Left lung (tissue), 14 donors: ENCODE measurements at regions of chr12 and their contacts with region 1.

Region 1: DNA sequence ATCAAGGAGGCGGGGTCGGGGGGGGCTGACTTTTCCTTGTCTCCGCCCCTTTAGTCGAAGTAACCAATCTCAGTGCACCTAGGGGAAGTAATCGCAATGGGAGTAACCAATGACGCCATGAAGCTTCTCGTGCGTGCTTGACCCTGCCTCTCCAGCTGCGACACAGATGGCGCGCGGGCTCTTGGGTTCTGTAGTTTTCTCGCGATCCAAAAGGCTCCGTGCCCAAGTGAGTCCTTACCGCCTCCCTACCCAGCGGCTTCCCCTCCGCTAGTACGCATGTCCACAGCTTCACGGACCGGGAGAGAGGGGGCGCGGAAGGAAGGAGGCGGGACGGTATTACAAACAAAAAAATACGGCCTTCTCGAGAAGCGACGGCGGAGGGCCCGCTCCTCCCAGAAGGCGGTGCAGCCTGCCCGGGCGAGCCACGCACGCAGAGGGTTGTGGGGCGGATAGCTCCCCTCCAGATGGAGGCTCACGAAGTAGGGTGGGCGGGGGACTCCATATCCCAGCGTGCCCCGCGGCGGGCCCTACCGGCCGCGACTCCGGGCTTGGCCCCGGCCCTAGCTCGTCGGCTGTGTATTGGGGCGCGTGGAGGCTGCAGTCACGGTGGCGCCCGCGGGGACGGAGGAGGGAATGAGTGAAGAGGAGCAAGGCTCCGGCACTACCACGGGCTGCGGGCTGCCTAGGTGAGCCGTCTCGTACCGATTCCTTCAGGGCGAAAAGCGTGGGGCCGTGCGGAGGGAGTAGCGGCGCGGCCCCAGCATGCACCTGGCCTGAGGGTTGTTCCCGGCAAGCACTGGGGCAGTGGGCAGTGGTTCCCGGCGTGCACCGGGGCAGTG is at the start of gene TARBP2:
- DNase-seq: peak; percentile 96 to 99 (median 98)
- ATAC-seq: peak; percentile 83
- H3K4me3 ChIP-seq: peak within 1 kb of the TSS; percentile 66 to 77
- H3K27ac ChIP-seq: peak within 1 kb of the TSS; percentile 98
- H3K4me1 ChIP-seq: peaks cover 24 to 54% of the 10 kb centered on the region in 2 donors
- H3K27me3 ChIP-seq: no peaks in the 10 kb centered on the region
- CTCF ChIP-seq: no peak
- polyA plus RNA-seq, gene TARBP2: 43.5 to 58.6 (median 50.1) TPM

Region 2: GRCh38 chr12:53047221-53048042 is 453.6 kb before region 1 on chr12:
- intact Hi-C with region 1: no loop called
- DNase-seq: peak; percentile 76 to 94 (median 86)
- ATAC-seq: peak; percentile 19
- H3K4me3 ChIP-seq: peak overlapping the region; percentile 36 to 68
- H3K27ac ChIP-seq: peak overlapping the region; percentile 89 to 96
- H3K4me1 ChIP-seq: peaks cover 42 to 57% of the 10 kb centered on the region in 2 donors
- H3K27me3 ChIP-seq: peaks cover 0 to 10% of the 10 kb centered on the region in 2 donors
- CTCF ChIP-seq: no peak

Region 3: GRCh38 chr12:53321074-53321814 is 179.8 kb before region 1 on chr12 and contains the start of gene AAAS:
- intact Hi-C with region 1: loop called in 1 of 2 experiments (anchors 10 kb)
- DNase-seq: peak; percentile 96 to 99 (median 98)
- ATAC-seq: peak; percentile 90
- H3K4me3 ChIP-seq: peak within 1 kb of the TSS; percentile 55 to 65
- H3K27ac ChIP-seq: peak within 1 kb of the TSS; percentile 91 to 97
- H3K4me1 ChIP-seq: peaks cover 17 to 47% of the 10 kb centered on the region in 2 donors
- H3K27me3 ChIP-seq: peaks cover 0 to 11% of the 10 kb centered on the region in 2 donors
- CTCF ChIP-seq: peak; percentile 100
- polyA plus RNA-seq, gene AAAS: 71.8 to 87.9 (median 79.6) TPM

Region 4: DNA sequence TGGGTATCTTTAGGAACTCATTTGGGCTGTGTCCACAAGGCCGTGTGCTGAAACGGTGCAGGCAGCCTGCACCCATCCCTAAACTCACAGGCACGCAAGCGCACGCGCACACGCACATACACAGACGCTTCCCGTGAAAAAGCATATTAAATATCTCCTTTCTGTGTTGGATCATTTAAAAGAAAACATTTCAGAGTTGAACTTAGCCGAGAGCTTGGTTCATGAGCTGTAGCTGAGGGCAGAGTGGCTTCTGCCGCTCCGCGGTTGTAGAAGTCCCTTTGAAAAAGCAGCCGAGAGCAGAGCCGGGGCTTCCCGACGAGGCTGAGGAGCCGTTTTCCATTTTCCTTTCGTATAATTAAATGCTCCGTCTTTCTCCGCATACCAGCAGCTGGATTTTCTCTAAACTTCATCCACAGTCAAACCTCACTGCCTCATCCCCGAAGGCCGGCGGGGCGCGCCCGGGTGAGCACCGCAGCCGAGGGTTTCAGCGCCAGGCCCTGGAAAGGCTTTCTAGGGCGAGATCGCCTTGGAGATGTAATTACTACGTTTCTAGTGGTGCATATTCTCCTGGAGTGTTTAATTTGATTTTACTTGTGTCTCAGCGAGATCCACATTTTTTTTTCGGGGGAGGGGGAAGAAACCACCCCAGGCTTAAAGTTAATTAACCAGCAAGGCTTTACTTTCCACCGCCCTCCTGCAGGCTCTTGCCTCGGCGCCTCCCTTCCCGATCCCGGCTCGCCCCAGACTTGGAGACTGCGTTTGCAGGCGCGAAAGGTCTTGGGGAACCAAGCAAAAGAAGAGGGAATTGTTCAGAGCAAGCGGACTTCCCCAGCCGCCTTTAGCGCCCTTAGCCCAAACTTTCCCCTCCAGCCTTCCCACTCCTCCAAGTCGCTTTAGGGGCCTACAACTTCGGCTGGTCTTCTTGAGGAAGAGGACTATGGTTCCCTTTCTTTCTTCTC is 434.7 kb after region 1 on chr12:
- intact Hi-C with region 1: no loop called
- DNase-seq: no peak
- ATAC-seq: no peak
- H3K4me3 ChIP-seq: no peak overlapping the region
- H3K27ac ChIP-seq: no peak overlapping the region
- H3K4me1 ChIP-seq: no peaks in the 10 kb centered on the region
- H3K27me3 ChIP-seq: peaks cover 100% of the 10 kb centered on the region in 2 donors
- CTCF ChIP-seq: no peak

Region 5: GRCh38 chr12:54214553-54215406 is 713.8 kb after region 1 on chr12:
- intact Hi-C with region 1: no loop called
- DNase-seq: peak in 3 of 4 donors; percentile 87 to 96 (median 88)
- ATAC-seq: peak; percentile 93
- H3K4me3 ChIP-seq: no peak overlapping the region
- H3K27ac ChIP-seq: no peak overlapping the region
- H3K4me1 ChIP-seq: peaks cover 10 to 33% of the 10 kb centered on the region in 2 donors
- H3K27me3 ChIP-seq: peaks cover 6 to 93% of the 10 kb centered on the region in 2 donors
- CTCF ChIP-seq: peak; percentile 95 to 99